ENCODE measurements at regions of chr12 and their contacts with region 1.

Region 1: GRCh38 chr12:50763639-50764285 is at the start of gene ATF1:
- DNase-seq: peak; percentile 93
- H3K4me3 ChIP-seq: peak within 1 kb of the TSS; percentile 56 to 88 (median 61)
- H3K27ac ChIP-seq: peak within 1 kb of the TSS; percentile 59
- H3K4me1 ChIP-seq: peaks cover 11% of the 10 kb centered on the region
- H3K27me3 ChIP-seq: no peaks in the 10 kb centered on the region
- CTCF ChIP-seq: no peak
- POLR2A ChIP-seq: peak; percentile 91
- total RNA-seq, gene ATF1: 26.7 and 26.9 TPM in 2 replicates

Region 2: DNA sequence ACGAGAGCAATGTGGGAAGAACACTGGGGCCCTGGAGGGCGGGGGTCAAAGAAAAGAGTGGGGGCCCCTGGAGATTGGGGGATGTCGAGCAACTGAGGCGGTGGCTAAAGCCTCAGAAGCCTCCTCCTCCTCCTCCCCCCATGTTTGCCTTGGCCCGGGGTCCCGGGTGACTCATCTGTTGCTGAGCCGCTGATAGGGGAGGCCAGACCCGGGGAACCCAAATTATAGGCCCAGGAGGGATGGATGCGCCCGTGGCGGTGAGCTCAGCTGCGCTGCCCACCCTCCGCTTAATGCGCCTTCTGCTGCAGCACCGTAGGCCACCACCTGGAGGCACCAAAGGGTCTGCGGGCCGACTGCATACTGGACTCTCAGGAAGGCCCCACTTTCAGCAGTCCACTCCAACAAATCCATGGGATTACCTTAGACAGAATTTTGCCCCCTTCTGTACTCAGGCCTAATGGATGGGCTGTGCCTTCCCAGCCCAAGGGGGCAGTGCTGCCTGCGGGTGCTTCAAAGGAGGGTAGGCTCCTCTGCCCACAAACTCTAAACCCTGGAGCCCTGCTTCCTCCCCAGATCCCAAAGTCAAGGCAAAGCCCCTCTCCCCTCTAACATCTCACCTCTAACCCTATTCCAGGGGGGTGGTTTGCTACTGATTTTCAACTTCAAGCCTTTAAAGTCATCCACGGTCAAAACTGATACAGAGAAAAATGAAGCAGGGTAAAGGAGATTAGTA is 1789.7 kb before region 1 on chr12:
- CTCF ChIA-PET with region 1: no interaction called
- POLR2A ChIA-PET with region 1: no interaction called
- dilution Hi-C with region 1: no loop called
- intact Hi-C with region 1: no loop called
- DNase-seq: peak; percentile 53
- H3K4me3 ChIP-seq: no peak overlapping the region
- H3K27ac ChIP-seq: no peak overlapping the region
- H3K4me1 ChIP-seq: no peaks in the 10 kb centered on the region
- H3K27me3 ChIP-seq: peaks cover 58 to 64% of the 10 kb centered on the region in 2 experiments
- CTCF ChIP-seq: peak; percentile 54 to 76
- POLR2A ChIP-seq: no peak

Region 3: DNA sequence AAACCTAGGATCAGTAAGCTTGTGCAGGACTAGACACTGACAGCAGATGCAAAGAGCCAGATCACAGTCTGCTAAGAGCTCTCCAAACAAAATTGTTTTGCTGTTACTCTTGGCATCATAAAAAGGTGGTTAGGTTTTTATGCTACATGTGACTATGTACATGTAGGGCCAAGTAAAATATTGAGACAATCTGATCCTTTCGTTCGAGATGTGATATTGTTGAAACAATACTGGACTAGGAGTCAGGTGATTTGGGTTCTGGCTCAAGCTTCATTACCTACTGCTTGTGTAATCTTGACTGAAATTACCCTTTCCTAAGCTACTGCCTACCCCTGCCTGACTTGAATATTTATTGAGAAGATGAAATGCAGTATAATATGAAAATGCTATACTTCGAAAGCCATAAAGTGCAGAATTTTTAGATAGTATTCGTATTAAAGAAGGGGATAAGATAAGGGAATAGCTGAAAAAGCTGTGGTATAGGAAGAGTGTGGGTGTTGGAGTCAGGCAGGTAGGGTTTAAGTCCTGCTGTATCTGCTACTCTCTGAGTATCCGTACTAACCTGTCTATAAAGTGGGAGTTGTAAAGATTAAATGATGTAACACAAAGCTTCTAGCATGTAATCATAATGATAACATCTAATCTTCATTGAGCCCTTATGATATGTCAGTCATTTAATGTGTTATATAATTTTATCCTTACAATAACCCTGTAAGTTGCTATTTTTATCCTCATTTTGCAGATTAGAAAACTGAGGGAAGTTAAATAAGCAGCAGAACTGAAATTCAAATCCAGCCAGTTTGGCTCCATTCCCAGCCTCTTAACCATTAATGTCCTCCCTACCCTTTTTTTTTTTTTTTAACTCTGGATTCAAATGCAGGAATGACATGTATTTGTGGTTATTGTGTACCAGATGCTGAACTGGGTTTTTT is 38.5 kb before region 1 on chr12:
- CTCF ChIA-PET with region 1: no interaction called
- POLR2A ChIA-PET with region 1: no interaction called
- dilution Hi-C with region 1: no loop called
- intact Hi-C with region 1: no loop called
- DNase-seq: no peak
- H3K4me3 ChIP-seq: no peak overlapping the region
- H3K27ac ChIP-seq: no peak overlapping the region
- H3K4me1 ChIP-seq: no peaks in the 10 kb centered on the region
- H3K27me3 ChIP-seq: no peaks in the 10 kb centered on the region
- CTCF ChIP-seq: no peak
- POLR2A ChIP-seq: no peak

Region 4: DNA sequence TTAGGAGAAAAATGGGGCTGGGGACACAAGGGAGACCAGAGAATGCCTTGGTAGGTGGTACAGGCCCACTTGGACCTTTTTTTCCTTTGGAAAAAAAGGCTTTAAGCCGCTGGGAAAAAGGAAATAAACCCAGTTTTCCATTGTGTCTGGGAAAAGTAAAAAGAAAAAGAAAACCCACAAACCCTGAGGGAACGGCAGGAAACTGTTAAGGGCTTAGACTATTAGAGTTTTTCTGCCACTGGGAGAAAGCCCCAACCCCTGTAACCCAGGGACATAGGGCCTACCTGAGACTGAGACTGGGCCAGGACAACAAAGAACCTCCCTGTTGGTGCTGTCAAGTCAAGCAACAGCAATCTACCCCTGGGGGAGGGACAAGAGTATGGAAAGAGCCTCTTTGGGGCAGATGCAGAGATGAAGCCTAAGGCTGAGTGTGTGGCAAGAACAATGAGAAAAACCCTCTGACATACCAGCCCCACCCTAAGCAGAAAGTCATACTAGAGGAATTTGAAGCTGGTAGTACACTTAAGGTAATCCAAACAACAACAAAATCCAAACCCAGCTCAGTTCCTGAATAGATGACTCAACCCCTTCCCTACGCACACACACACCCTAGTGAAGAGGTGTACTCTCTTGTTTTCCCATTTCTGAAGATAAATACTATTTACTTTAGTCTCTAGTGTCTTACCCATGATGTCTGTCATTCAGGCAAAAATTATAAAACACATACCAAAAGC is 22.9 kb after region 1 on chr12:
- CTCF ChIA-PET with region 1: interaction called, 30 read pairs
- POLR2A ChIA-PET with region 1: no interaction called
- dilution Hi-C with region 1: no loop called
- intact Hi-C with region 1: loop called (anchors 2 kb)
- DNase-seq: peak; percentile 81
- H3K4me3 ChIP-seq: no peak overlapping the region
- H3K27ac ChIP-seq: peak overlapping the region; percentile 98
- H3K4me1 ChIP-seq: peaks cover 21% of the 10 kb centered on the region
- H3K27me3 ChIP-seq: no peaks in the 10 kb centered on the region
- CTCF ChIP-seq: no peak
- POLR2A ChIP-seq: no peak

Region 5: GRCh38 chr12:50825372-50825838 is 61.6 kb after region 1 on chr12:
- CTCF ChIA-PET with region 1: interaction called, 56 read pairs
- POLR2A ChIA-PET with region 1: no interaction called
- dilution Hi-C with region 1: no loop called
- intact Hi-C with region 1: loop called (anchors 1 kb)
- DNase-seq: peak; percentile 78
- H3K4me3 ChIP-seq: no peak overlapping the region
- H3K27ac ChIP-seq: no peak overlapping the region
- H3K4me1 ChIP-seq: no peaks in the 10 kb centered on the region
- H3K27me3 ChIP-seq: no peaks in the 10 kb centered on the region
- CTCF ChIP-seq: peak; percentile 24 to 25
- POLR2A ChIP-seq: no peak

Region 6: DNA sequence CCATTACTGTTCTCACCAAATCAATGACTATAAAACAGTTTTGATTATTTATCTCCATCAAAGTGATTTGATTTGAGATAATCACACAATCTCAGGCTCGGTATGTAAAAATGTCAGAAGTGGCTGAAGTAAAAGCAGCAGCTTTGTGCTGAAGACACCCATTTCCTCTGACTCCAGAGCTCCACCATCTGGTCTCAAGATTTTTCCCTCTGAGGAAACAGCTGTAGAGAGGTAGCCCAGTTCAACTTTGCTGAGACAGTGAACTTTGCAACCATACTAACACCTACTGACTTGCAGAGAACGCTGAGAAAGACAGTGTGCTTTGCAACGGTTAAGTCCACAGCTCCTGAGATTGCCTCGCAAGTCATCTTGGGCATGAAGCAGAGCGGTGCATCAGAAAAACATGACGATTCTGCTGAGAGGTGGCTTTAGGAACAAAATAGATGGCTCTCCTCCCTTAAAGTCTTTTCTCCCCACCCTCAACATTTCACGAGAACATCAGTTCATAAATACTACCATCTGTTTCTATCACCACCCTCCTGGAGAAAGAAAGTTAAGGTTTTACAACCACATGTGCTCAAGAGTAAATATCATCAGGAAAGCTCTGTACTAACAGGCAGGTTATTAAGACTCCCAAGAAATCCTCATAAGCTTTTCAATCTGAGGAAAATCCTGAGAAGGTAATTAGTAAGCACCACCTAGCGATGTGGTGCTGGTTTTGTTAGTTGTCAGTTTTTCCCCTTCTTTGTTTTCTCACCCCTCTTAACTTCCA is 223.4 kb after region 1 on chr12:
- CTCF ChIA-PET with region 1: interaction called, 103 read pairs
- POLR2A ChIA-PET with region 1: interaction called, 4 read pairs
- dilution Hi-C with region 1: no loop called
- intact Hi-C with region 1: loop called (anchors 1 kb)
- DNase-seq: peak; percentile 81
- H3K4me3 ChIP-seq: no peak overlapping the region
- H3K27ac ChIP-seq: peak overlapping the region; percentile 15
- H3K4me1 ChIP-seq: peaks cover 41% of the 10 kb centered on the region
- H3K27me3 ChIP-seq: no peaks in the 10 kb centered on the region
- CTCF ChIP-seq: peak; percentile 28 to 53
- POLR2A ChIP-seq: no peak

Region 7: GRCh38 chr12:51083126-51083833 is 319.5 kb after region 1 on chr12 and contains the start of gene CSRNP2:
- CTCF ChIA-PET with region 1: interaction called, 3 read pairs
- POLR2A ChIA-PET with region 1: interaction called, 7 read pairs
- dilution Hi-C with region 1: no loop called
- intact Hi-C with region 1: loop called (anchors 10 kb)
- DNase-seq: peak; percentile 94
- H3K4me3 ChIP-seq: peak within 1 kb of the TSS; percentile 77 to 98 (median 78)
- H3K27ac ChIP-seq: peak within 1 kb of the TSS; percentile 64
- H3K4me1 ChIP-seq: peaks cover 12% of the 10 kb centered on the region
- H3K27me3 ChIP-seq: no peaks in the 10 kb centered on the region
- CTCF ChIP-seq: peak in 1 of 2 donors; percentile 19
- POLR2A ChIP-seq: peak; percentile 100
- total RNA-seq, gene CSRNP2: 42.1 and 49.7 TPM in 2 replicates

Measured in endothelial cell of umbilical vein (primary cell).